Endothelial cell of umbilical vein (primary cell): ENCODE measurements at regions of chr1 and their contacts with region 1.

Region 1: DNA sequence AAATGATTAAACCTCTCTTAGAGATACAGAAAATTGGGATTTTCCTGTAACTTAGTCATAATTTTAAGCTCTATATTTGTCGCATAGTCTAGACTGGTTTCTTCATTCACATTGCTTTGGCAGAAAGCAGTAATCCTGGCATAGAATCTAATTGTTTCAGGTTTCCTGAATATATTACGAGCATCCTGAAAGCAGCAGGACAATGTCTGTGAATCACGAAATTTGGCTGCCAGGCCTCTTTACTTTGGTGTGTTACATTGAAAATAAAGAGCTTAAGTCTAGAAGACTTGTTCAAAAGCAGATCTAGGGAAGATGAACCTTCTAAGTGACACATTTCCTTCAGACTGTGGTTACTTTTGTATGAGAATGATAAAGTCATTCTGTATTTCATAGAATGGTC is 72.2 kb downstream of the TDRD5 start:
- DNase-seq: peak; percentile 96
- H3K4me3 ChIP-seq: no peak overlapping the region
- H3K27ac ChIP-seq: peak overlapping the region; percentile 84
- H3K4me1 ChIP-seq: peaks cover 13% of the 10 kb centered on the region
- H3K27me3 ChIP-seq: peaks cover 0 to 2% of the 10 kb centered on the region in 2 experiments
- CTCF ChIP-seq: no peak
- POLR2A ChIP-seq: no peak

Region 2: DNA sequence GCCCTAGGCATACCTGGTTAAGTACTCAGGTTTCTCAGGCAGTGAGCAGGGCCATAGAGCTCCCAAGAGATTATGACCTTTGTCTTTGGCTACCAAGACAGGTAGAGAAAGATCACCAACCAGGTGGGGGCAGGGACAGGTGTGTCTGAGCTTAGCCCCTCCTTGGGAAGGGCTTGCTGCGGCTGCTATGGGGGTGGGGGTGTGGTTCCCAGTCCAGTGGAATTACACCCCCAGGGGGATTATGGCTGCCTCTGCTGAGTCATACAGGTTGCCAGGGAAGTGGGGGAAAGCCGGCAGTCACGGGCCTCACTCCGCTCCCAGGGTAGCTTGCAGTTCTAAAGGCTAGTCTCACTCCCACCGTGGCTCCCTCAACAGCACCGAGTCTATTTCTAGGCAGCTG is 14.1 kb after region 1 on chr1:
- CTCF ChIA-PET with region 1: interaction called, 10 read pairs
- POLR2A ChIA-PET with region 1: no interaction called
- dilution Hi-C with region 1: no loop called
- intact Hi-C with region 1: no loop called
- DNase-seq: no peak
- H3K4me3 ChIP-seq: no peak overlapping the region
- H3K27ac ChIP-seq: no peak overlapping the region
- H3K4me1 ChIP-seq: no peaks in the 10 kb centered on the region
- H3K27me3 ChIP-seq: peaks cover 0 to 17% of the 10 kb centered on the region in 2 experiments
- CTCF ChIP-seq: no peak
- POLR2A ChIP-seq: no peak